Gastrocnemius medialis (tissue), 4 donors: ENCODE measurements at regions of chr16 and their contacts with region 1.

Region 1: GRCh38 chr16:12120217-12120981 is 143.9 kb downstream of the SNX29 start:
- DNase-seq: peak; percentile 7 to 18
- ATAC-seq: peak; percentile 41 to 62
- H3K4me3 ChIP-seq: no peak overlapping the region
- H3K27ac ChIP-seq: no peak overlapping the region
- H3K4me1 ChIP-seq: peaks cover 0 to 8% of the 10 kb centered on the region in 2 donors
- H3K27me3 ChIP-seq: no peaks in the 10 kb centered on the region
- CTCF ChIP-seq: no peak
- POLR2A ChIP-seq: no peak

Region 2: GRCh38 chr16:12215277-12216105 is 95.1 kb after region 1 on chr16:
- in situ Hi-C with region 1: loop called in 1 of 4 experiments (anchors 25 kb)
- intact Hi-C with region 1: no loop called
- DNase-seq: no peak
- ATAC-seq: no peak
- H3K4me3 ChIP-seq: no peak overlapping the region
- H3K27ac ChIP-seq: no peak overlapping the region
- H3K4me1 ChIP-seq: no peaks in the 10 kb centered on the region
- H3K27me3 ChIP-seq: no peaks in the 10 kb centered on the region
- CTCF ChIP-seq: no peak
- POLR2A ChIP-seq: no peak

Region 3: GRCh38 chr16:12426122-12426521 is 305.7 kb after region 1 on chr16:
- in situ Hi-C with region 1: loop called in 1 of 4 experiments (anchors 25 kb)
- intact Hi-C with region 1: no loop called
- DNase-seq: no peak
- ATAC-seq: no peak
- H3K4me3 ChIP-seq: no peak overlapping the region
- H3K27ac ChIP-seq: no peak overlapping the region
- H3K4me1 ChIP-seq: no peaks in the 10 kb centered on the region
- H3K27me3 ChIP-seq: no peaks in the 10 kb centered on the region
- CTCF ChIP-seq: no peak
- POLR2A ChIP-seq: no peak

Region 4: GRCh38 chr16:12484972-12485371 is 364.6 kb after region 1 on chr16:
- in situ Hi-C with region 1: no loop called
- intact Hi-C with region 1: no loop called
- DNase-seq: no peak
- ATAC-seq: no peak
- H3K4me3 ChIP-seq: no peak overlapping the region
- H3K27ac ChIP-seq: no peak overlapping the region
- H3K4me1 ChIP-seq: no peaks in the 10 kb centered on the region
- H3K27me3 ChIP-seq: no peaks in the 10 kb centered on the region
- CTCF ChIP-seq: no peak
- POLR2A ChIP-seq: no peak

Region 5: DNA sequence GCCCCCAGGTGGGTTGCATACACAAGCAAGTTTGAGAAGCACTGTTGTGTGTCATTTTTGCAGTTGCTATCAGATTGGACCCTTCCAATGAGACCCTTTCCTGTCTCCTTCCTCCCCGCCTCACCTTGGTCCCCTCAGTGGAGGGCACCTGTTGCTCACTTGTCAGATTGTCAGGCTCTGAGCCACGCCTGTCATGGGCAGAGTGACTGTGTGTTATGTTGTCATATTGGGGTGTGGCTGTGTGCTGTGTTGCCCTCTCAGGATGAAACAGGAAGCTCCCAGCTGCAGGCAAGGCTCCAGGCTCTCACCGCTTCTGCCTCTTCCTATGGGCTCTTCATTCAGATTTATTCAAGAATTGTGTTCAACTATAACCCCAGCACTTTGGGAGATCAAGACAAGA is 380.4 kb after region 1 on chr16:
- in situ Hi-C with region 1: no loop called
- intact Hi-C with region 1: no loop called
- DNase-seq: no peak
- ATAC-seq: no peak
- H3K4me3 ChIP-seq: no peak overlapping the region
- H3K27ac ChIP-seq: no peak overlapping the region
- H3K4me1 ChIP-seq: no peaks in the 10 kb centered on the region
- H3K27me3 ChIP-seq: no peaks in the 10 kb centered on the region
- CTCF ChIP-seq: no peak
- POLR2A ChIP-seq: no peak